ENCODE measurements at regions of chr16 and their contacts with region 1.

Region 1: DNA sequence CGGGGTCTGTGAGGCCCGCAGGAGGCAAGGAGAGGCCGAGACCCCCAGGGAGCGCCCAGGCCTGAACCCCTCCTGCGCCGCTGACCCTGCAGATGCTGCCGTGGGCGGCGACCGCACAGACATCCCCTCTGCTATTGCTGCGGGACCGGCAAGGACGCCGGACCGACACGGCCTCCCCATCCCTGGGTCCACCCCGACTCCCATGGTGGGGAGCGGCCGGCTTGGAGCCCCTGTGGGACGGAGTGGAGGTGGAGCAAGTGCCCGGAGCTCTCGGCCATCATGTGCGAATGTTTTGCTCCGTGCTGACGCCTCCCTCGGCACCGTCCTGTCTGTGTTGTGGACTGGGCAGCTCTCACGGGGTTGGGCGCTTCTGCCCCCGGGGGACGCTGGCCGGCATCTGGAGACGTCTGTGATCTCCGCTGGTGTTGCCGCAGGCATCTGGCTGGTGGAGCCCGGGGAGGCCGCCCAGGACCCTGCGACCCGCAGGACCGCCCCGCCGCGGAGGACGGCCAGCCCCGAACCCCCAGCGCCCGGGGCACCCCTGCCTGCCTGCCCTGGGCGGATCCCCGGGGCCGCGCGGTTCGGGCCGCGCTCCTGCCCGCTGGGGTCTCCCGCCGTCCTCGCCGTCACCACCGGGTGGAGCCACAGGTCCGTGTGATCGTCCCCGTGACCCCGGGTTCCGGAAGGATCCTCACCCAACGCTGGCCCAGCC is 12.8 kb upstream of the GNG13 start:
- DNase-seq: peak in 13 of 14 experiments; percentile 32 to 70 (median 45)
- ATAC-seq: peak; percentile 60
- H3K4me3 ChIP-seq: no peak overlapping the region
- H3K4me3 Mint-ChIP-seq: peak overlapping the region; percentile 60
- H3K27ac ChIP-seq: no peak overlapping the region
- H3K27ac Mint-ChIP-seq: no peak overlapping the region
- H3K4me1 ChIP-seq: peaks cover 15% of the 10 kb centered on the region
- H3K4me1 Mint-ChIP-seq: peaks cover 9% of the 10 kb centered on the region
- H3K27me3 ChIP-seq: peaks cover 20 to 43% of the 10 kb centered on the region in 2 experiments
- H3K27me3 Mint-ChIP-seq: peaks cover 32% of the 10 kb centered on the region
- CTCF ChIP-seq: peak; percentile 65

Region 2: DNA sequence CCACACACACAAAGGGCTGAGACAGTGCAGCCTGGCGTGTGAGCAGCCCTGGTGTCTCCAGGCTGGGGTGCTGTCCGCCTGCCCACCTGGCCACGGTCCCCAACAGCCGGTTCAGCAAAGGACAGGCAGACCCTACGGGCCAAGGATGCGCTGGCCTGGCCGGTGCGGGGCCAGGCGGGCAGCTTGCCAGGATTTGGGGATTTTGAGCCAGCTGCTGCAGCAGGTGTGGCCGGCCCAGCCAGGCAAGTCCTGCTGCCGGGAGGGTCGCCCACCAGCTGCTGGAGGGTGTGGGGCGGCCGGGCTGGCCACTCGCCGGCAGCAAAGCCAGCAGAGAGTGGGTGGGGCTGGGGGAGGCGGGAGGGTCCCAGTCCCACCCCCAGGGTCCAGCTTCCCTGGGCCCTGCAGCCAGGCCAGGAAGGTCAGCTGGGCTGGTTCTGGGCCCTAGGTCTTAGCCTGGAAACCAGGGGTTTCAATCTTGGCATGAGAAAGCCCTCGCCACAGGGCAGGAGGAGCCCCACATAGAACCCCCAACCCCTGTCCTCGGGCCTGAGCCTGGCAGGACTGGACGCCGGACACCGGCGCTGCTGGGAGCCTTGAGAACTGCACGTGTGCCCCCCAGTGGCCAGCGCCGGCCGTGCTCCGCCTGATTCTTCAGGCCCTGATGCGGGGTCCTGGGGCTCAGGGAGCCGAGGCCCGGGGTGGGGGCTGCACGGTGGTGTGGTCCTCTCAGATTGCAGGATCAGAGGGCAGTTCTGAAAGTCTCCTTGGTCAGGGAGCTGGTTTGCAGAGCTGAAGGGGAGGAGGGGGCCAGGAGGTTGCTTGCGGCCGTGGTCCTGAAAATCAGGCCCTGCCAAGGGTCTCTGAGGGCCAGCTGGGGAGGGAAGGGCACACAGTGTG is 241.5 kb after region 1 on chr16:
- CTCF ChIA-PET with region 1: no interaction called
- POLR2A ChIA-PET with region 1: no interaction called
- intact Hi-C with region 1: loop called (anchors 1 to 5 kb)
- DNase-seq: peak in 11 of 14 experiments; percentile 12 to 63 (median 28)
- ATAC-seq: no peak
- H3K4me3 ChIP-seq: no peak overlapping the region
- H3K4me3 Mint-ChIP-seq: no peak overlapping the region
- H3K27ac ChIP-seq: no peak overlapping the region
- H3K27ac Mint-ChIP-seq: no peak overlapping the region
- H3K4me1 ChIP-seq: peaks cover 11% of the 10 kb centered on the region
- H3K4me1 Mint-ChIP-seq: no peaks in the 10 kb centered on the region
- H3K27me3 ChIP-seq: peaks cover 0 to 8% of the 10 kb centered on the region in 2 experiments
- H3K27me3 Mint-ChIP-seq: peaks cover 4% of the 10 kb centered on the region
- CTCF ChIP-seq: peak; percentile 66

Region 3: DNA sequence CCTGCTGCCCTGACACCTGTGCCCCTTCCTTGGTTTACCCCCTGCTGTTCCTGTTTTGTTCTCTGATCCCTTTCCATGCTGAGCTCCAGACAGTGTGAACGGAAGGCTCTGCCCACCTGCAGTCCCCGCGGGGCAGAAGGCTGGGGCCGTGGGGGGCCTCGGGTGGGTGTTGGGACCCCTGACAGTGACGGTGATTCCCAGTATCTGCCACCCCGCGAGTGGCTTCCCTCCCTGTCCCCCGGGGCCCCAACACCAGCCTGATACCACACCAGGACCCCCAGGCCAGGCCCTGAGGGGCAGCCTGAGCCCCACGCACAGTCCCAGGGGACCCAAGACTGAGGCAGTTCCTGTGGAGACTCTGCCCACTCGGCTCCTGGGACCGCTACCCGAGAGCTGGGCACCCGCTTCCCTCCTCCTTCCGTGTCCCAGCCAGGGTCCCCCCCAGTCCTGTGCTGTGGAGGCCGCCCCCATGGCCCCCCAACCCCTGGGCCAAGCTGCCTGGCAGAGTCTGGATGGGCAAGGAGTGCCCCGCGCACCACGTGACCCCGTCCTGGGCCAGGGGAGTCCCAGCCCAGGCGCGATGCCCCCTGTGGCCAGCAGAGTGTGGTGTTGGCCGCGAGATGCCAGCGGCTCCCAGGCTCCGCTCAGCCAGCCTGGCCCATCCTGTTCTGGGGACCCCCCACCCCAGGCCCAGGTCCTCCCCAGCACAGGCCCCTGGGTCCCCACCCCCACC is 292.7 kb after region 1 on chr16:
- CTCF ChIA-PET with region 1: no interaction called
- POLR2A ChIA-PET with region 1: no interaction called
- intact Hi-C with region 1: loop called in 1 of 2 experiments (anchors 2 kb)
- DNase-seq: peak in 13 of 14 experiments; percentile 11 to 69 (median 33)
- ATAC-seq: peak; percentile 67
- H3K4me3 ChIP-seq: no peak overlapping the region
- H3K4me3 Mint-ChIP-seq: no peak overlapping the region
- H3K27ac ChIP-seq: no peak overlapping the region
- H3K27ac Mint-ChIP-seq: no peak overlapping the region
- H3K4me1 ChIP-seq: peaks cover 9% of the 10 kb centered on the region
- H3K4me1 Mint-ChIP-seq: no peaks in the 10 kb centered on the region
- H3K27me3 ChIP-seq: peaks cover 23 to 36% of the 10 kb centered on the region in 2 experiments
- H3K27me3 Mint-ChIP-seq: peaks cover 14% of the 10 kb centered on the region
- CTCF ChIP-seq: peak; percentile 39

Measured in CD4-positive, alpha-beta T cell (primary cell).